ENCODE measurements at regions of chr2 and their contacts with region 1.

Region 1: GRCh38 chr2:100640431-100641124 is 77.8 kb downstream of the PDCL3 start:
- DNase-seq: peak in 2 of 14 experiments; percentile 35 to 42
- ATAC-seq: no peak
- H3K4me3 ChIP-seq: no peak overlapping the region
- H3K4me3 Mint-ChIP-seq: no peak overlapping the region
- H3K27ac ChIP-seq: no peak overlapping the region
- H3K27ac Mint-ChIP-seq: peak overlapping the region; percentile 51
- H3K4me1 ChIP-seq: peaks cover 55% of the 10 kb centered on the region
- H3K4me1 Mint-ChIP-seq: peaks cover 55% of the 10 kb centered on the region
- H3K27me3 ChIP-seq: no peaks in the 10 kb centered on the region
- H3K27me3 Mint-ChIP-seq: no peaks in the 10 kb centered on the region
- CTCF ChIP-seq: no peak

Region 2: DNA sequence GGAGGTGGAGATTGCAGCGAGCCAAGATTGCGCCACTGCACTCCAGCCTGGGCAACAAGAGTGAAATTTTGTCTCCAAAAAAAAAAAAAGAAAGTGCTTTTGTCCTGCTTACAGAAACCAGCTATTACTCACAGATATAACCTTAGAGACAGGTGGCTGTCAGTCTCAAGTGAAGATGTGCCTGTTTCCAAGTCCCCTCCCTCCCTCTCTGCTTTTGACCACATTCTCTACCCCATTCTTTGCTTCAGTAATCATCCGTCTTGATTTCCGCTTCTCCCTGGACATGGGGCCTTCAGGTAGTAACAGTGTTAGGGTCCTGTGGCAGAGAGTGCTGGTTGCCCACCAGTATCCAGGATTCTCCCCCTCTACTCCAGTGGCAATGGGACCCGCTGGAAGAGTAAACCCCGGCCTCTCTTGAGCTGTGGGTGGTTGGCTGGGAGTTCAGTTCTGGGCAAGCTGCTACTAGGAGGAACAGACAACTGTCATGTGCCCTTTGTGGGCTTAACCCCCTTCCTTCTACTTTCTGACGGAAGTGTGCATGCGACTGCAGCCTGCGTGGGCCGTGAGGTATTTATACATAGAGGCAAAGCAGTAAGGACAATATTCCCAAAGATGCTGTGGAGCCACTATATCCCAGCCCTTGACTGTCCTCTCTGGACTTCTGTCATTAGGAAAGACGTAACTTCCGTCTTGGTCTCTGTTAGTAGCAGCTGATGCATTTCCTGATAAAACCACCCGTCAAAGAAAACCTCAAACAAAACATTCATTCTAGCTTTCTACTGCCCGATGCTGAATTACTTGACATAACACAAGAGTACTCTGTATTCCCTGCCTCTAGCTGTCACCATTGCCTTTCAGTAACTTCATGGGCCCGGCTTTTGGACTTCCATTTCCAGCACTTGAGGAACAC is 60.0 kb before region 1 on chr2:
- CTCF ChIA-PET with region 1: interaction called, 12 read pairs
- POLR2A ChIA-PET with region 1: interaction called, 5 read pairs
- intact Hi-C with region 1: no loop called
- DNase-seq: peak; percentile 26 to 84 (median 56)
- ATAC-seq: peak; percentile 80
- H3K4me3 ChIP-seq: peak overlapping the region; percentile 21
- H3K4me3 Mint-ChIP-seq: peak overlapping the region; percentile 2
- H3K27ac ChIP-seq: peak overlapping the region; percentile 82 to 83
- H3K27ac Mint-ChIP-seq: peak overlapping the region; percentile 90
- H3K4me1 ChIP-seq: peaks cover 40% of the 10 kb centered on the region
- H3K4me1 Mint-ChIP-seq: peaks cover 45% of the 10 kb centered on the region
- H3K27me3 ChIP-seq: no peaks in the 10 kb centered on the region
- H3K27me3 Mint-ChIP-seq: no peaks in the 10 kb centered on the region
- CTCF ChIP-seq: no peak

Region 3: DNA sequence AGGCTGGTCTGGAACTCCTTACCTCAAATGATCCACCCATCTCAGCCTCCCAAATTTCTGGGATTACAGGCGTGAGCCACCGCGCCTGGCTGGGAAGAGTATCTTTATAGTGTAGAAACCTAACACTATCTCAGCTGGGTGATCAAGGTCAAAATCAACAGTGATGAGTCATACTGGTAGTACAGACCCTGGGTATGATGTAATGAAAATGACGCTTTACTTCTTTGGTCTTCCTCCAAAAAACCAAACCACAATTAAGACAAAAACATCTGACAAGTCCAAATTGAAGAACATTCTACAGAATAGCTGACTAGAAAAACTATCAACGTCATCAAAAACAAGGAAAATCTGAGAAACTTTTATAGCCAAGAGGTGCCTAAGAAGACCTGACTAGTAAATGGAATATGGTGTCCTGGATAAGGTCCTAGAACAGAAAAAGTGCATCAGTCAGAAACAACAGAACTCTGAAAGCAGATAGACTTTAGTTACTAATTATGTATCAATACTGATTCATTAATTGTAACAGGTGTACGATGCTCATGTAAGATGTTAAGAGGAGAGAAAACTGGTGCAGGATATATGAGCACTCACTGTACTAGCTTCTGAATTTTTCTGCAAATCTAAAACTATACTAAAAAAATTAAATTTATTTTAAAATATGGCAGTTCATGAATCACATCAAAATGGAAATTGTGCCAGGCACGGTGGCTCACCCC is 52.3 kb before region 1 on chr2:
- CTCF ChIA-PET with region 1: no interaction called
- POLR2A ChIA-PET with region 1: no interaction called
- intact Hi-C with region 1: loop called in 1 of 2 experiments (anchors 2 kb)
- DNase-seq: peak in 6 of 14 experiments; percentile 8 to 84 (median 52)
- ATAC-seq: peak; percentile 88
- H3K4me3 ChIP-seq: no peak overlapping the region
- H3K4me3 Mint-ChIP-seq: no peak overlapping the region
- H3K27ac ChIP-seq: no peak overlapping the region
- H3K27ac Mint-ChIP-seq: peak overlapping the region; percentile 32
- H3K4me1 ChIP-seq: peaks cover 9% of the 10 kb centered on the region
- H3K4me1 Mint-ChIP-seq: peaks cover 31% of the 10 kb centered on the region
- H3K27me3 ChIP-seq: no peaks in the 10 kb centered on the region
- H3K27me3 Mint-ChIP-seq: no peaks in the 10 kb centered on the region
- CTCF ChIP-seq: no peak

Region 4: GRCh38 chr2:100630473-100630977 is 10.1 kb before region 1 on chr2:
- CTCF ChIA-PET with region 1: no interaction called
- POLR2A ChIA-PET with region 1: interaction called, 29 read pairs
- intact Hi-C with region 1: no loop called
- DNase-seq: peak in 2 of 14 experiments; percentile 32 to 51
- ATAC-seq: peak; percentile 60
- H3K4me3 ChIP-seq: no peak overlapping the region
- H3K4me3 Mint-ChIP-seq: peak overlapping the region; percentile 36
- H3K27ac ChIP-seq: no peak overlapping the region
- H3K27ac Mint-ChIP-seq: peak overlapping the region; percentile 48
- H3K4me1 ChIP-seq: peaks cover 25% of the 10 kb centered on the region
- H3K4me1 Mint-ChIP-seq: peaks cover 34% of the 10 kb centered on the region
- H3K27me3 ChIP-seq: no peaks in the 10 kb centered on the region
- H3K27me3 Mint-ChIP-seq: no peaks in the 10 kb centered on the region
- CTCF ChIP-seq: no peak

Region 5: GRCh38 chr2:100653449-100654035 is 13.0 kb after region 1 on chr2:
- CTCF ChIA-PET with region 1: interaction called, 3 read pairs
- POLR2A ChIA-PET with region 1: interaction called, 20 read pairs
- intact Hi-C with region 1: loop called in 1 of 2 experiments (anchors 1 kb)
- DNase-seq: peak in 13 of 14 experiments; percentile 18 to 81 (median 31)
- ATAC-seq: peak; percentile 94
- H3K4me3 ChIP-seq: no peak overlapping the region
- H3K4me3 Mint-ChIP-seq: peak overlapping the region; percentile 65
- H3K27ac ChIP-seq: no peak overlapping the region
- H3K27ac Mint-ChIP-seq: peak overlapping the region; percentile 93
- H3K4me1 ChIP-seq: peaks cover 28% of the 10 kb centered on the region
- H3K4me1 Mint-ChIP-seq: peaks cover 57% of the 10 kb centered on the region
- H3K27me3 ChIP-seq: no peaks in the 10 kb centered on the region
- H3K27me3 Mint-ChIP-seq: no peaks in the 10 kb centered on the region
- CTCF ChIP-seq: no peak

Region 6: DNA sequence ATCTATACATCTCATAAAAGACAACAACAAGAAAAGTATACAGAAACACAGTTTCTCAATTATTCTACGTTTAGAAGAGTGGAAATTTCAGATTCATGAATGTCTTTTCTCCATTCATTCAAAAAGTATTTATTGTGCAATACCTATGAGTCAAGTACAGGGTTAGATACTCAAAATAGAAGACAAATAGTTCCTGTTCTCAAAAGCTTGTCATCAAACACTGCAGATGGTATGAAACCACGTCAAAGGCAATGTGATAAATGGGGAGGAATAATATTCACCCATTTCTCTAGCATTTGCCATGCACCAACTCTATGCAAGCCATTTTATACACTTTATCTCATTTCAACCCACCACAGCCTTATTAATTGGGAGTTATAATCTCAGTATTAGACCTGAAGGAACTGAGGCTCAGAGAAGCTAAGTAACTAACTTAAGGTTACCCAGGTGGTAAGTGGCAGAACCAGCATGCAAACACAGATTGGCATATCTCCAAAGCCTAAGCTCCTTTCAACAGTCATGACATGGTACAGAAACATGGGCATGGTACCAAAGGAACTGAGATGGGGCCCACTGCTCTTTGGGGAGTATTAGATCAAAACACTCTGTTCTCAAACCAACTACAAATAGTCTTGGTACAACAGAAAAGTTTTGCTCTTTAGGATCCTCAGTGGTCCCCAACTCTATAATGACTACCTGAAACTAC is 112.2 kb after region 1 on chr2:
- CTCF ChIA-PET with region 1: no interaction called
- POLR2A ChIA-PET with region 1: no interaction called
- intact Hi-C with region 1: no loop called
- DNase-seq: peak in 2 of 14 experiments; percentile 2 to 3
- ATAC-seq: no peak
- H3K4me3 ChIP-seq: no peak overlapping the region
- H3K4me3 Mint-ChIP-seq: no peak overlapping the region
- H3K27ac ChIP-seq: no peak overlapping the region
- H3K27ac Mint-ChIP-seq: no peak overlapping the region
- H3K4me1 ChIP-seq: no peaks in the 10 kb centered on the region
- H3K4me1 Mint-ChIP-seq: peaks cover 13% of the 10 kb centered on the region
- H3K27me3 ChIP-seq: no peaks in the 10 kb centered on the region
- H3K27me3 Mint-ChIP-seq: no peaks in the 10 kb centered on the region
- CTCF ChIP-seq: no peak

Region 7: GRCh38 chr2:100818606-100819369 is 178.2 kb after region 1 on chr2:
- CTCF ChIA-PET with region 1: no interaction called
- POLR2A ChIA-PET with region 1: interaction called, 3 read pairs
- intact Hi-C with region 1: loop called in 1 of 2 experiments (anchors 10 kb)
- DNase-seq: peak in 7 of 14 experiments; percentile 5 to 37 (median 17)
- ATAC-seq: peak; percentile 24
- H3K4me3 ChIP-seq: peak overlapping the region; percentile 50
- H3K4me3 Mint-ChIP-seq: peak overlapping the region; percentile 87
- H3K27ac ChIP-seq: no peak overlapping the region
- H3K27ac Mint-ChIP-seq: peak overlapping the region; percentile 69
- H3K4me1 ChIP-seq: peaks cover 22% of the 10 kb centered on the region
- H3K4me1 Mint-ChIP-seq: peaks cover 25% of the 10 kb centered on the region
- H3K27me3 ChIP-seq: peaks cover 15 to 19% of the 10 kb centered on the region in 2 experiments
- H3K27me3 Mint-ChIP-seq: peaks cover 39% of the 10 kb centered on the region
- CTCF ChIP-seq: no peak

Measured in CD4-positive, alpha-beta T cell (primary cell).